OCI-LY7 (cell line): ENCODE measurements at regions of chr11 and their contacts with region 1.

Region 1: GRCh38 chr11:22787551-22788162 is 41.9 kb downstream of the SVIP start:
- DNase-seq: peak; percentile 56
- H3K4me3 ChIP-seq: no peak overlapping the region
- H3K27ac ChIP-seq: no peak overlapping the region
- H3K4me1 ChIP-seq: no peaks in the 10 kb centered on the region
- CTCF ChIP-seq: peak; percentile 87

Region 2: DNA sequence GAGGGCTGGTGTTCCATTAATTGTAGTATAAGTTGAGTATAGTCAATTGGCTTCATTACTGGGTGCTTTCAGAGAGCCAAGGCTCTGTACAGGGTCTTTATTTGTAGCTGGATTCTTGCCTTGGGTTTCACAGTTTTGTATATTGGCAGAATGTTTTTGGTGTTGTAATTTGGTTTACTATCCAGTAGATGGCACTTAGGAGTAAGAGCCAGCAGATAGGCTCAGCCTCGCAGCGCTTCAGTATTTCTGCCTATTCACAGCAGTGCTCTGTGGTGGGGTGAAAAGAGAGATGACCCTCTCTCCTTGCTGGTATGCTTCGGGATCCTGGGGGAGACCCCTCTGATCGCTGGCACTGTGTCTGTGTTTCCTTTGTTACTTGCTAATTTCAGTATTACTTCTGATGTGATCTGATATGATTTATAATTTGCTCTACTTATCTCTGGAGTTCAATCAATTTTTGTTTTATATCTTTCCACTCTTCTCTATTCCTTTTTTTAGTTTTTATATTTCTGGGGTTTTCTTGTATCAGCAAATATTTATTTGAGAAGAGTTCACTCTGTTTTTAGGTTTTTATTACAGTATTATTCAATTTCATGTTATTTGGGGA is 542.6 kb before region 1 on chr11:
- CTCF ChIA-PET with region 1: no interaction called
- POLR2A ChIA-PET with region 1: no interaction called
- intact Hi-C with region 1: loop called (anchors 5 kb)
- DNase-seq: peak; percentile 44
- H3K4me3 ChIP-seq: no peak overlapping the region
- H3K27ac ChIP-seq: no peak overlapping the region
- H3K4me1 ChIP-seq: no peaks in the 10 kb centered on the region
- CTCF ChIP-seq: peak; percentile 79

Region 3: DNA sequence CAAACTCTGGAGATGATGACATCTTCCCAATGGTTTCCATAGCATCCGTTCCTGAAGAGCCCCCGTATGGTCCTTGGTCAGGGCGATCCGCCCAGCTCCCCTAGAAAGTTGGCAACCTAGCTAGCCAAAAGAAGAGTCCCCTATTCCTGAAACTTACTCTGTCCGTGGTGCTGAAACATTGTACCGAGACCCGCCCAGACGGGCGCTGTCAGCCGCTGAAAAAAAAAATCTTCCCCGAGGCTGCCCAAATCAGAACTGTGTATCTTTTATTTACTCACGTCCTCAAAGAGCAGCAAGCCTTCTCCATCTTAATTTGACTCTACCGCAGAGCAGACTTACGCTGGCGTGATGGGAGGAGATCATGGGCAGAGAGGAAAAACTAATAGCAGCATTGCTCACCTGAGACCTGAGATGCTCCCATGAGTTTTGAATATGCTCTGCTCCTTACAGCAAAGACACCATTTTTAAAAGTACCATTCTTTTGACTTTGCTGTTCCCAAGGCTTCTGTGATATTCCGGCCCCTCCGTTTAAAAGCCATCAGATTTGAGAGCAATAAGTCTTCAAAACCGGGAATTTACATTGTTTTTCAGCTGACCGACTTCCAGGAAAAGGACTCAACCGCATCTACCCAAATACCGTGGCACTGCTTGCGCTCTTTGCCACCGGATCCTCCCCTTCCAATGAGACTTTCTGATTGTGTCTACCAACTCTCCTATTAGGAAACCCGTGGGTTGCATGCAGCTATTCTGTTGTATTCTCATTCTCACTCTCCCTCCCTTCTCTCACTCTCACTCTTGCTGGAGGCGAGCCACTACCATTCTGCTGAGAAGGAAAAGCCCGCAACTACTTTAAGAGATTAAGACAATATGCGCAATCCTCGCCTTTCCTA is 449.8 kb before region 1 on chr11 and contains the start of gene SLC17A6:
- CTCF ChIA-PET with region 1: no interaction called
- POLR2A ChIA-PET with region 1: interaction called, 3 read pairs
- intact Hi-C with region 1: loop called (anchors 2 kb)
- DNase-seq: peak; percentile 4
- H3K4me3 ChIP-seq: no peak within 1 kb of the TSS
- H3K27ac ChIP-seq: no peak within 1 kb of the TSS
- H3K4me1 ChIP-seq: no peaks in the 10 kb centered on the region
- CTCF ChIP-seq: no peak
- total RNA-seq, gene SLC17A6: not detected in 2 replicates

Region 4: DNA sequence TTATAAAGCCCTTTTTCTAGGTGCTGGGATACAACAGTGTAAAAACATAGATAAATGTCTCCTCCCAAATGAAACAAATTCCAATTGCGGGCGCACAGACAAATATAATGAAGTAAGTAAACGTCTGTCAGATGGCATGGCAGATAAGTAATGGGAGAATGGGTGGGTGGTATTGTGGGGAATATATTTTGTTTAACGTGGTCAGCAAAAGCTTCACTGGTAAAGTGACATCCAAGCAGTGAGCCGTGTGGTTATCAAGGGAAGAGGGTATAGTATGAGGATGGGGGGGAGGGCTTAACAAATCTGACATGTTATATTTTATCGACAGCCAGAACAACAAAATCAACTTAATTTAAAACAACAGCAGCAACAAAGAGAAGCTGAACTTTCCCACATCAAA is 40.7 kb after region 1 on chr11:
- CTCF ChIA-PET with region 1: no interaction called
- POLR2A ChIA-PET with region 1: no interaction called
- intact Hi-C with region 1: no loop called
- DNase-seq: no peak
- H3K4me3 ChIP-seq: no peak overlapping the region
- H3K27ac ChIP-seq: no peak overlapping the region
- H3K4me1 ChIP-seq: no peaks in the 10 kb centered on the region
- CTCF ChIP-seq: no peak